ENCODE measurements at regions of chrX and their contacts with region 1.

Region 1: GRCh38 chrX:56802921-56803849 is 74.1 kb downstream of the NBDY start:
- DNase-seq: peak; percentile 22 to 84 (median 61)
- ATAC-seq: no peak
- H3K4me3 ChIP-seq: no peak overlapping the region
- H3K4me3 Mint-ChIP-seq: peak overlapping the region in 8 of 10 donors; percentile 21 to 97 (median 92)
- H3K27ac ChIP-seq: peak overlapping the region; percentile 52
- H3K27ac Mint-ChIP-seq: peak overlapping the region; percentile 18 to 96 (median 73)
- H3K4me1 ChIP-seq: peaks cover 21 to 26% of the 10 kb centered on the region in 2 donors
- H3K4me1 Mint-ChIP-seq: peaks cover 27 to 64% (median 44%) of the 10 kb centered on the region in 7 donors
- H3K27me3 ChIP-seq: no peaks in the 10 kb centered on the region
- H3K27me3 Mint-ChIP-seq: no peaks in the 10 kb centered on the region

Region 2: GRCh38 chrX:56762220-56762619 is 41.0 kb before region 1 on chrX:
- CTCF ChIA-PET with region 1: interaction called, 3 read pairs
- POLR2A ChIA-PET with region 1: no interaction called
- intact Hi-C with region 1: loop called in 1 of 2 experiments (anchors 1 kb)
- DNase-seq: no peak
- ATAC-seq: no peak
- H3K4me3 ChIP-seq: peak overlapping the region; percentile 24
- H3K4me3 Mint-ChIP-seq: peak overlapping the region; percentile 73 to 86 (median 80)
- H3K27ac ChIP-seq: peak overlapping the region; percentile 82
- H3K27ac Mint-ChIP-seq: peak overlapping the region; percentile 90 to 99 (median 94)
- H3K4me1 ChIP-seq: peaks cover 19 to 45% of the 10 kb centered on the region in 2 donors
- H3K4me1 Mint-ChIP-seq: peaks cover 32 to 77% (median 61%) of the 10 kb centered on the region in 7 donors
- H3K27me3 ChIP-seq: no peaks in the 10 kb centered on the region
- H3K27me3 Mint-ChIP-seq: no peaks in the 10 kb centered on the region

Region 3: GRCh38 chrX:57453901-57454300 is 650.7 kb after region 1 on chrX:
- CTCF ChIA-PET with region 1: no interaction called
- POLR2A ChIA-PET with region 1: no interaction called
- intact Hi-C with region 1: loop called (anchors 2 to 10 kb)
- DNase-seq: peak in 7 of 9 donors; percentile 0 to 35 (median 14)
- ATAC-seq: no peak
- H3K4me3 ChIP-seq: no peak overlapping the region
- H3K4me3 Mint-ChIP-seq: no peak overlapping the region
- H3K27ac ChIP-seq: no peak overlapping the region
- H3K27ac Mint-ChIP-seq: peak overlapping the region in 1 of 9 donors; percentile 62
- H3K4me1 ChIP-seq: no peaks in the 10 kb centered on the region
- H3K4me1 Mint-ChIP-seq: peaks cover 0 to 3% (median 0%) of the 10 kb centered on the region in 7 donors
- H3K27me3 ChIP-seq: no peaks in the 10 kb centered on the region
- H3K27me3 Mint-ChIP-seq: no peaks in the 10 kb centered on the region

Region 4: GRCh38 chrX:57918750-57919436 is 1115.7 kb after region 1 on chrX:
- CTCF ChIA-PET with region 1: no interaction called
- POLR2A ChIA-PET with region 1: no interaction called
- intact Hi-C with region 1: loop called in 1 of 2 experiments (anchors 5 kb)
- DNase-seq: peak in 6 of 9 donors; percentile 13 to 37 (median 29)
- ATAC-seq: peak; percentile 54
- H3K4me3 ChIP-seq: no peak overlapping the region
- H3K4me3 Mint-ChIP-seq: no peak overlapping the region
- H3K27ac ChIP-seq: no peak overlapping the region
- H3K27ac Mint-ChIP-seq: peak overlapping the region in 1 of 9 donors; percentile 25
- H3K4me1 ChIP-seq: no peaks in the 10 kb centered on the region
- H3K4me1 Mint-ChIP-seq: no peaks in the 10 kb centered on the region
- H3K27me3 ChIP-seq: no peaks in the 10 kb centered on the region
- H3K27me3 Mint-ChIP-seq: no peaks in the 10 kb centered on the region

Measured in naive thymus-derived CD4-positive, alpha-beta T cell (primary cell).